ENCODE measurements at regions of chr12 and their contacts with region 1.

Region 1: GRCh38 chr12:51326762-51327439 is 2.9 kb upstream of the BIN2 start:
- DNase-seq: peak; percentile 74
- H3K4me3 Mint-ChIP-seq: peak overlapping the region; percentile 74
- H3K27ac Mint-ChIP-seq: peak overlapping the region; percentile 89
- H3K4me1 Mint-ChIP-seq: peaks cover 62% of the 10 kb centered on the region
- H3K27me3 Mint-ChIP-seq: no peaks in the 10 kb centered on the region

Region 2: DNA sequence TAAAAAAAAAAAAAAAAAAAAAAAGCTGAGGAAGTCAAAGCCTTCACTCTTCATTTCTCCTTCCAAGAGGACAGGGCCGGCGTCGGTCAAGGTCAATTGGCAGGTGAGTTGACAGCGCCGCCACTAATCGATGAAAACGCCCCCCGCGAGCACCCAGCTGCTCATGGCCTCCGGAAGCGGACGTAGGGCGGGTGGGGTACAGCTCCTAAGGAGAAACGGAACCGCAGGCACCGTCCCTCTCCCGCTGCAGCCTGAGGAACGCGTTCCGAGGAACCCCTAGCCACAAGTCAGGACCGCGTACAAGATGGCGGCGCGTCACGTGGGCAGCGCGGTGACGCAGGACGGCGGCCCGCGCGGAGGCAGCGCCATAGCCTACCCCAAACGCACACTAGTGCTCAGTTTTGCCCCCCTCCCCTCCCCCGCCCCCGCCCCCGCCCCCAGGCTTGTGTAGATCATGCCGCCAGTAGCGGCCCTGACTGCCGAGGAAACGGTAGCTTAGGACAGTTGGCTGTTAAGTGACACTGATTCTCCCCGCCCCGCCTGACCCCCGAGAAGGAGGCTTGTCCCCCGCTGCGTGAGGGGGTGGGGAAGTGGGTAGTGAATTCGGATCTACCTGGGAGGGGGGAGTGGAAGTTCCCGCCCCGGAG is 563.1 kb before region 1 on chr12 and contains the start of gene ATF1:
- intact Hi-C with region 1: loop called (anchors 10 kb)
- DNase-seq: peak; percentile 98
- H3K4me3 Mint-ChIP-seq: peak within 1 kb of the TSS; percentile 94
- H3K27ac Mint-ChIP-seq: peak within 1 kb of the TSS; percentile 99
- H3K4me1 Mint-ChIP-seq: peaks cover 31% of the 10 kb centered on the region
- H3K27me3 Mint-ChIP-seq: no peaks in the 10 kb centered on the region
- total RNA-seq, gene ATF1: 66.0 and 67.6 TPM in 2 replicates

Region 3: GRCh38 chr12:51217968-51218606 is 108.8 kb before region 1 on chr12 and contains the start of gene POU6F1:
- intact Hi-C with region 1: loop called (anchors 5 kb)
- DNase-seq: peak; percentile 90
- H3K4me3 Mint-ChIP-seq: peak within 1 kb of the TSS; percentile 85
- H3K27ac Mint-ChIP-seq: peak within 1 kb of the TSS; percentile 88
- H3K4me1 Mint-ChIP-seq: peaks cover 13% of the 10 kb centered on the region
- H3K27me3 Mint-ChIP-seq: no peaks in the 10 kb centered on the region
- total RNA-seq, gene POU6F1: 5.1 and 9.0 TPM in 2 replicates

Region 4: DNA sequence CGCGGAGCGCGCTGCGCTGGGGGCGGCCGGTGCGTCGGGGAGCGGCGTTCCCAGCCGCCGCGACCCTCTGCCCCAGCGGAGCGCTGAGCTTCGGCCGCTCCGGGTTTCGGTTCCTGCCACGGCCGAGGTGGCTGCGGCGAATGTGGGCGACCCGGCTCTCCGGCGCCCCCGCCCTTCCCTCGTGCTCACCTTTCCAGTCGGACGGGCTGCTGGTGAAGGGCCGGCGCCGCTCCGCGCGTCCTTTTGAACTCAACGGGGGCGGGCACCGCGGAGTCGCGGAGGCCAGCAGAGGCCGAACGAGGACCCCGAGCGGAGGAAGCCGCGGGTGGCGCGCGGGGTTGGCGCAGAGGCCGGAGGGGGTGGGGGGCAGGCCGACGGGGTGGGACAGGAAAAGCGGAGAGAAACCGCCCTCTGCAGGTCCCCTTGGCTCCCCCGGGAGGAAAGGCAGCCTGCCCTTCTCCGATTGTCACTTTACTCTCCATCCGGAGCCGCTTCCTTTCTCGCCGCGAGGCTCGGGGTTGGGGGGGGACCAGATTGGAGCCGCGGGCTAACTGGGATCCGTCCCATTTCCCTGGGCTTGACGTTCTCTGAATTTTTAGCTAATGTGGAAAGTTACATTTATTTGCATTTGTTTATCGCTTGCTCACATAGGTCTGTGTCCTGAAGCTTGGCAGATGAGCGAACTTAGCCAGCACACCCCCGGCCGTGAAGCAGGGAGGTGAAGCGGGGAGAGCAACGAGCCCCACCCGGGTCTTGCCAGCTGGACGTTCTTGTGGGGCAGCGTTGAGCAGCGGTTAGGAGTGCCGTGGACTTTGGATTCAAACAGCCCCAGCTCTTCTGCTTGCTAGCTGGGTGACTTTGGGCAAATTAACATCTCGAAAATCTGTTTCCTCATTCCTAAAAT is 56.6 kb before region 1 on chr12 and contains the start of gene SMAGP:
- intact Hi-C with region 1: loop called (anchors 5 kb)
- DNase-seq: peak; percentile 86
- H3K4me3 Mint-ChIP-seq: peak within 1 kb of the TSS; percentile 83
- H3K27ac Mint-ChIP-seq: peak within 1 kb of the TSS; percentile 65
- H3K4me1 Mint-ChIP-seq: peaks cover 19% of the 10 kb centered on the region
- H3K27me3 Mint-ChIP-seq: peaks cover 27% of the 10 kb centered on the region
- total RNA-seq, gene SMAGP: 0.24 and 0.26 TPM in 2 replicates

Region 5: GRCh38 chr12:51341259-51342007 is 14.5 kb after region 1 on chr12:
- intact Hi-C with region 1: loop called (anchors 2 kb)
- DNase-seq: peak; percentile 93
- H3K4me3 Mint-ChIP-seq: peak overlapping the region; percentile 42
- H3K27ac Mint-ChIP-seq: peak overlapping the region; percentile 35
- H3K4me1 Mint-ChIP-seq: peaks cover 14% of the 10 kb centered on the region
- H3K27me3 Mint-ChIP-seq: peaks cover 5% of the 10 kb centered on the region

Measured in activated CD4-positive, alpha-beta T cell treated with anti-CD3 and anti-CD28 coated beads, Interleukin-2, amount 10 ng/mL, durations not matched to agents 24 days and 14 days (primary cell).